ENCODE measurements at regions of chr11 and their contacts with region 1.

Region 1: DNA sequence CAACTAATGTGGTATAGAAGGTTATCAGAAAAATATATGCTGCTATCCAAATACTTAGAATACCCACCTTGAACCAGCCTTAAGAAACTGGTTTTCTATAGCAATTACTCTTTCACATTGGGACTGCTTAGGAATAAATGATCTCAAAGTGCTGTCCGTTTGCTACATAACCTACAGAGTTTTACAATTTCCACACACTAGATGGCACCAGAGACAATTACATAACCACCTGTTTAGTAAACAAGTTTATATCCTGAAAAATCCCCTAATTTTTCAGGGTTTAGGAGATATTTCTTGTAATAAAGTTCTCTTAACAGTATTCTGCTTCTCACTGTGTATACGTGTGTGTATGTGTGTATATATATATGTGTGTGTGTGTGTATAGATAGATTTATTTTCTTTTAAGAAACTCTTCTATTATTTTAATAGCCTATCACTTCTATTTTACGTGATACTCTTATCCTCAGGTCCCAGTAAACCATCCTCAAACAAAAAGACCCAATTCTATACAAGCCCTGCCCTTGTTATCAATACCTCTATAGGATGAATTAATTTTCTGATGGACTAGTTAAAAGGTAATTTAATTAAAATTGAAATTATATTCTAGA is 6.7 kb upstream of the OR5I1 start:
- DNase-seq: peak in 1 of 4 donors; percentile 24
- ATAC-seq: no peak
- H3K4me3 ChIP-seq: no peak overlapping the region
- H3K27ac ChIP-seq: no peak overlapping the region
- H3K4me1 ChIP-seq: no peaks in the 10 kb centered on the region
- H3K27me3 ChIP-seq: no peaks in the 10 kb centered on the region
- CTCF ChIP-seq: peak in 1 of 2 donors; percentile 32

Region 2: GRCh38 chr11:56783448-56784041 is 840.7 kb after region 1 on chr11:
- intact Hi-C with region 1: loop called in 1 of 2 experiments (anchors 10 kb)
- DNase-seq: peak in 2 of 4 donors; percentile 5 to 42
- ATAC-seq: peak; percentile 58
- H3K4me3 ChIP-seq: no peak overlapping the region
- H3K27ac ChIP-seq: no peak overlapping the region
- H3K4me1 ChIP-seq: no peaks in the 10 kb centered on the region
- H3K27me3 ChIP-seq: no peaks in the 10 kb centered on the region
- CTCF ChIP-seq: peak; percentile 48 to 54